ENCODE measurements at regions of chr4 and their contacts with region 1.

Region 1: DNA sequence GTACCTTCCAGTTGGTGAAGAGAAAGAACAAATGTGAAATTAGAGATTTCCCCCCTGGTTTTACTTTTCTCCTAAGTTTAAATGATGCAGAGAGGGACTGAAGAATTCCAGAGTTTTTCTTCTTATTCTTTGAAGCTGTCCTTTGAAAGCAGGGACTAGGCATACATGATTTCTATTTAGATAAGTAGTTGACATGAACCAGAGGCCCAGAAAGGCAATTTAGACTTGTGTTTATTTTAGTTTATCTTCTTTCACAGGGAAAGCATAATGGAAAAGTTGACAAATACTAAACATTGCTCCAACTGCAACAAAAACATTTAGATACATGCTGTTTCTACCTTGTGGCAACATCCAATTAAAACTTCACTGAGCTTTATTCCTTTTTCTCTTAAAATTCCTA is 32.0 kb downstream of the PTPN13 start:
- DNase-seq: no peak
- ATAC-seq: no peak
- H3K4me3 ChIP-seq: no peak overlapping the region
- H3K27ac ChIP-seq: no peak overlapping the region
- H3K4me1 ChIP-seq: no peaks in the 10 kb centered on the region
- H3K27me3 ChIP-seq: no peaks in the 10 kb centered on the region
- CTCF ChIP-seq: no peak
- EP300 ChIP-seq: no peak
- POLR2A ChIP-seq: no peak
- RAD21 ChIP-seq: no peak

Region 2: GRCh38 chr4:86608757-86609375 is 17.2 kb before region 1 on chr4:
- CTCF ChIA-PET with region 1: interaction called, 5 read pairs
- POLR2A ChIA-PET with region 1: interaction called, 3 read pairs
- RAD21 ChIA-PET with region 1: interaction called, 6 read pairs
- SMC1A ChIA-PET with region 1: interaction called, 71 read pairs
- in situ Hi-C with region 1: no loop called
- intact Hi-C with region 1: no loop called
- DNase-seq: no peak
- ATAC-seq: no peak
- H3K4me3 ChIP-seq: no peak overlapping the region
- H3K27ac ChIP-seq: no peak overlapping the region
- H3K4me1 ChIP-seq: no peaks in the 10 kb centered on the region
- H3K27me3 ChIP-seq: 0 out of 4 replicates have a peak, but pooled peaks cover 0 to 2% of the 10 kb centered on the region in 2 experiments
- CTCF ChIP-seq: no peak
- EP300 ChIP-seq: no peak
- POLR2A ChIP-seq: no peak
- RAD21 ChIP-seq: no peak

Region 3: DNA sequence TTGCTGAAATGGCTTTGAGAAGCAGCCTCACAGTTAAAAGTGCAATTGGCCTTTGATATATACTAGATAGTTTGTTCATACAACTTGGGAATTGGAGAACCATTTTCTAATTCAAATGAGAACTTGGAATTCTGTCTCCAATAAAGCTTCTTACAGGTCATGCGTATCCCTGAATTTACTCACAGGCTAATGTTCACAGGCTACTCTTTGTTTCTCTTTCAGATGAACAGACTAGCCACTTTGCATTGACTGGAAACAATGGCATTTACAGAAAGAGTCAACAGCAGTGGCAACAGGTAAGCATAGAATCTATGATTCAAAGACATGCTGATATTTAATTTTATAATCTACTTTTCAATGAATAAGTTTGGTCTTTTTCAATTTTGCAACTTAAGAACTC is 322.2 kb after region 1 on chr4:
- CTCF ChIA-PET with region 1: no interaction called
- POLR2A ChIA-PET with region 1: no interaction called
- RAD21 ChIA-PET with region 1: no interaction called
- SMC1A ChIA-PET with region 1: no interaction called
- in situ Hi-C with region 1: no loop called
- intact Hi-C with region 1: no loop called
- DNase-seq: no peak
- ATAC-seq: peak; percentile 56
- H3K4me3 ChIP-seq: no peak overlapping the region
- H3K27ac ChIP-seq: peak overlapping the region; percentile 48; the same call in 1 of the 2 replicates
- H3K4me1 ChIP-seq: peaks cover 26% of the 10 kb centered on the region
- H3K27me3 ChIP-seq: no peaks in the 10 kb centered on the region
- CTCF ChIP-seq: no peak
- EP300 ChIP-seq: no peak
- POLR2A ChIP-seq: no peak
- RAD21 ChIP-seq: no peak

Measured in GM12878 (cell line).